Naive thymus-derived CD4-positive, alpha-beta T cell (primary cell): ENCODE measurements at regions of chr1 and their contacts with region 1.

Region 1: DNA sequence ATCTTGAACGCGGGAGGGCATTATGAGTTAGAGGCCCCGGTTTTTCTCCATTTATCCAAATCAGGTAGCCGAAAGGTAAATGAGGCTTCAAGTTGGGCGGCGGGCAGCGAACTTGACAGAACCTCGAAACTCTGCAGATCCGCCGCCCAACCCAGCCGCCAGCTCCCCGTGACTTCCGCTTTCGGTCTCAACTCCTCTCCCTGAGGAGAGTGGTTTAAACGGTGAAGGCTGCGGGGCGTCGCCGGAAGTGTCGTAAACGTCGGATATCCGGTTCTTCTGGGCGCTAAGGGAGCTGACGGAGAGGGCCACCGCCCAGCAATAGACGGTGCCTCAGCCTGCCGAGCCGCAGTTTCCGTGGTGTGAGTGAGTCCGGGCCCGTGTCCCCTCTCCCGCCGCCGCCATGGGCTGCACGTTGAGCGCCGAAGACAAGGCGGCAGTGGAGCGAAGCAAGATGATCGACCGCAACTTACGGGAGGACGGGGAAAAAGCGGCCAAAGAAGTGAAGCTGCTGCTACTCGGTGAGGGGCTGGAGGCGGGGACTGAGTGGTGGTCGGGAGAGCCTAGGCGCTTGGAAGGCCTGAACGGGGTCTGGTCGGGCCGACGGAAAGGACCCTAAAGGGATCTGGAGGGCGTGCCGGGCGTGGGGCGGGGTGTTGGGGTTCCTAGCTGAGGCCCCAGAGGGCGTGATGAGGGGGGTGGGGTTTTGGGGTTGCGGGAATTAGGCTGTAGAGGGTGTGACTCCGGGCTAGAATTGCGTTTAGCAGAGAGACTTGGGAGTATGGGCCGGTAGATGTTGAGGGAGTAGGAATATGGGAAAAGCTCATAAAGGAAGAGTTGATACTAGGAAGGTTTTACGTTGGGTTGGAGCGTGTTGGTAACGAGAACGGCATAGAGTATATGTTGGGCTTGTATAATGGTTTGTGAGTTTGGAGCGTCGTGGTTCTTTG is at the start of gene GNAI3:
- DNase-seq: peak; percentile 78 to 97 (median 95)
- ATAC-seq: peak; percentile 96
- H3K4me3 ChIP-seq: peak within 1 kb of the TSS; percentile 89
- H3K4me3 Mint-ChIP-seq: peak within 1 kb of the TSS; percentile 90 to 99 (median 97)
- H3K27ac ChIP-seq: peak within 1 kb of the TSS; percentile 93
- H3K27ac Mint-ChIP-seq: peak within 1 kb of the TSS; percentile 89 to 100 (median 99)
- H3K4me1 ChIP-seq: peaks cover 25 to 27% of the 10 kb centered on the region in 2 donors
- H3K4me1 Mint-ChIP-seq: peaks cover 30 to 75% (median 55%) of the 10 kb centered on the region in 7 donors
- H3K27me3 ChIP-seq: no peaks in the 10 kb centered on the region
- H3K27me3 Mint-ChIP-seq: no peaks in the 10 kb centered on the region
- total RNA-seq, gene GNAI3: 4.9 to 9.3 (median 7.0) TPM

Region 2: DNA sequence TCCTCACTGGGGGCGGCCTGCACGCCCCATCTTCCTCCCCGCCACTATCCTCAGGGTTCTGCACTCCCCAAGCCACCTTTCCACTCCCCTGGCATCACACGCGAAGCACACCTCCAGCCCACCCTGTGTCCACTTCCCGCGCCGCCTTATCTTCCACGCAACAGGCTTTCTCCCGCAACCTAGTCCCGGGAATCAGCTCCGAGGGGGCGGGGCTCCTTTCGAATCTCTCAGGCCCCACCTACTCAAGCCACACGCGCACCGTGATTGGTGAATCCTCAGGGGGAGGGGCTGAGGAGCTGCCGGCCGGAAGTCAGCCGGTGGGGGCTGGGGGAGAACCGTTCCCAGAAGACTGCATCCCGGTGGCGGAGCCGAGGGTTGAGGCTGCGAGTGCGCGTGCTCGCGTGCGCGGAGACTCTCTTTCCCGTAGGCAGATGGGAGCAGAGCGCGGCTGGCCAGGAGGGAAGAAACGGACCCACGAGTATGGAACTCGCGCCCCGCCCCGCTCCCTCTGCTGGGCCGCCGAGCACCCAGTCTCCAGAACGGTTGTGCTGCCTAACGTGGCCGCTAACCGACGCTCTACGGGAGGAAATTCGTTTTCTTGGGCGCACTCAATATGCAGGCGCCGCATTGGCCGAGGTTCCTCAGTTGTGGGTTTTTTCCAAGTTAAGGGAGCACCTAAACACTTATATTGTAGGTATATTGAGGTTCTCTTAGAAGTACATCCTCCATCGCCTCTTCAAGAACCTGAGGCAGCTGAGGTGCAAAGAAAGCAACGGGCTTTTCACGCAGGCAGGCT is 265.4 kb before region 1 on chr1 and contains the start of gene PSRC1:
- CTCF ChIA-PET with region 1: no interaction called
- POLR2A ChIA-PET with region 1: no interaction called
- intact Hi-C with region 1: loop called in 1 of 2 experiments (anchors 1 kb)
- DNase-seq: peak; percentile 78 to 94 (median 88)
- ATAC-seq: peak; percentile 98
- H3K4me3 ChIP-seq: peak within 1 kb of the TSS; percentile 92
- H3K4me3 Mint-ChIP-seq: peak within 1 kb of the TSS; percentile 89 to 99 (median 96)
- H3K27ac ChIP-seq: peak within 1 kb of the TSS; percentile 65
- H3K27ac Mint-ChIP-seq: peak within 1 kb of the TSS; percentile 55 to 94 (median 88)
- H3K4me1 ChIP-seq: peaks cover 8 to 11% of the 10 kb centered on the region in 2 donors
- H3K4me1 Mint-ChIP-seq: peaks cover 6 to 29% (median 14%) of the 10 kb centered on the region in 7 donors
- H3K27me3 ChIP-seq: no peaks in the 10 kb centered on the region
- H3K27me3 Mint-ChIP-seq: peaks cover 0 to 8% (median 0%) of the 10 kb centered on the region in 5 donors
- total RNA-seq, gene PSRC1: 0.38 to 16.1 (median 1.3) TPM in 4 of 5 experiments, not detected in the other

Region 3: GRCh38 chr1:109370712-109371455 is 177.7 kb before region 1 on chr1:
- CTCF ChIA-PET with region 1: no interaction called
- POLR2A ChIA-PET with region 1: no interaction called
- intact Hi-C with region 1: no loop called
- DNase-seq: no peak
- ATAC-seq: no peak
- H3K4me3 ChIP-seq: no peak overlapping the region
- H3K4me3 Mint-ChIP-seq: peak overlapping the region in 2 of 10 donors; percentile 20 to 68
- H3K27ac ChIP-seq: no peak overlapping the region
- H3K27ac Mint-ChIP-seq: peak overlapping the region in 1 of 9 donors; percentile 1
- H3K4me1 ChIP-seq: no peaks in the 10 kb centered on the region
- H3K4me1 Mint-ChIP-seq: peaks cover 4 to 49% (median 7%) of the 10 kb centered on the region in 7 donors
- H3K27me3 ChIP-seq: peaks cover 0 to 3% of the 10 kb centered on the region in 2 donors
- H3K27me3 Mint-ChIP-seq: peaks cover 21 to 40% (median 33%) of the 10 kb centered on the region in 5 donors

Region 4: DNA sequence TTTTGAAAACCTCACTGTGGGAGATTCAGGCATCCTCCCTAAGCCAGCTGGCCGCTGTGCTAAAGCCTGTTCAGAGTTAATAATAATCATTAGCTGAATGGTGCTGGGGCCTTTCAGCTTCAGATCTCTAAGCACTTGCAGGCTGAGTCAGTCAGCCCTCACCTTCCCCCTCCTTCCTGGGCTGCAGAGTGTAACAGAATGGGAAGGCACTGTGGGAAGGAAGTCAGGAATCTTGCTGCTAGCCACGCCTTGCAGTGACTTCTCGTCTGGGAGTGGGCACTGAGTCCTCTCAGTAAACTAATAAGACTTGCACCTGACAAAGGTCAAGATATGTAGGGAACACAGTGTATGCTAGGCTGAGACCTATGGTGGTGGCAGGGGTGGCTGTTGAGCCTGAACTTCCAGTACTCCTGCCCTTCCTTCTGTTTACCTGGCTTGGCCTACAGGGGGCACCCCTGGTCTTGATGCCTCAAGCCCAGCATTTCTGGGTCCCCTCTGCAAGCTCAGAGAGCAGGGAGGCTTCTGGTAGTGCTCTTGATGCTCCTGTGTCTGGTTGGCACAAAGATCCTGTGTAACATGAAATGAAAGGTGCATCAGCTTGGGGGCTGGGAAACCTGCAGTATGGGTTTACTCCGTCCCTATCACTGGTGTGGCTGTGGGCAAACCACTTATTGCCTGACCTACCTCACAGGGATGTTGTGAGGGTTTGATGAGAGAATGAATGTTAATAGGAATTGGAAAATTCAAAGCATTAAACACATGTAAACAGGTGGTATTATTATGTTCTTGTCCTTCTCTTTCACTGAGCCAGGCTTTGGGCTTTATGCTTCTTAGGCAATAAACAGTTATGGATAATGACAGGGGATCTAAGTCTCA is 48.7 kb before region 1 on chr1:
- CTCF ChIA-PET with region 1: interaction called, 1,240 read pairs
- POLR2A ChIA-PET with region 1: interaction called, 11 read pairs
- intact Hi-C with region 1: no loop called
- DNase-seq: peak in 8 of 9 donors; percentile 50 to 69 (median 62)
- ATAC-seq: peak; percentile 28
- H3K4me3 ChIP-seq: peak overlapping the region; percentile 9
- H3K4me3 Mint-ChIP-seq: peak overlapping the region; percentile 28 to 98 (median 89)
- H3K27ac ChIP-seq: peak overlapping the region; percentile 95
- H3K27ac Mint-ChIP-seq: peak overlapping the region; percentile 87 to 99 (median 98)
- H3K4me1 ChIP-seq: peaks cover 72 to 84% of the 10 kb centered on the region in 2 donors
- H3K4me1 Mint-ChIP-seq: peaks cover 68 to 99% (median 93%) of the 10 kb centered on the region in 7 donors
- H3K27me3 ChIP-seq: no peaks in the 10 kb centered on the region
- H3K27me3 Mint-ChIP-seq: no peaks in the 10 kb centered on the region

Region 5: DNA sequence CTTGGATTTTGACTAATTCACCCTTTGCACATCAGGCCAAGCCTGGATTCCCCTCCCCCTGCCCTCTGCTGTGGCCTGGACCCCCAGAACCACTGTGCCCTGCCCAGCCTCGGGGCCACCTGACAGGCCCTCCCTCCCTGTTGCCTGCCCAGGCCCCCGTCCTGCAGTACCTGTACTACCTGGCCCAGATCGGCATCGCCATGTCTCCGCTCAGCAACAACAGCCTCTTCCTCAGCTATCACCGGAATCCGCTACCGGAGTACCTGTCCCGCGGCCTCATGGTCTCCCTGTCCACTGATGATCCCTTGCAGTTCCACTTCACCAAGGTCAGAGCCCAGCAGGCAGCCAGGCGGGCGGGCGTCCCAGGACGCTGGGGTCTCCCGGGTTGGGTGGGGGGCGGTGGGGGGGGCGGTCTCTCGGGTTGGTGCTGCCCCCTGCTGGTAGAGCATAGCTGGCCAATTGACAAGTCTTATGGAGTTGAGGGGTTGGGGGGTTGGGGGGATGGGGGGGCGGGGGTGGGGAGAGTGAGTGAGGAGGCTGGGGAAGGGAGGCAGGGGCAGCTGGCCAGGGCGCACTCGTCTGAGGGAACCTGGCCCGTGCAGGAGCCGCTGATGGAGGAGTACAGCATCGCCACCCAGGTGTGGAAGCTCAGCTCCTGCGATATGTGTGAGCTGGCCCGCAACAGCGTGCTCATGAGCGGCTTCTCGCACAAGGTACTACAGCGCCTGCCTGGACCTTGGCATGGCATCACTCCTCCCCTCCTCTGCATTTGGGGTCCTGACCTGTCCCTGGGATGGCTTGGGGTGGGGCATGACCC is 81.7 kb after region 1 on chr1:
- CTCF ChIA-PET with region 1: interaction called, 84 read pairs
- POLR2A ChIA-PET with region 1: interaction called, 13 read pairs
- intact Hi-C with region 1: loop called in 1 of 2 experiments (anchors 1 kb)
- DNase-seq: peak in 5 of 9 donors; percentile 21 to 51 (median 35)
- ATAC-seq: peak; percentile 26
- H3K4me3 ChIP-seq: no peak overlapping the region
- H3K4me3 Mint-ChIP-seq: no peak overlapping the region
- H3K27ac ChIP-seq: no peak overlapping the region
- H3K27ac Mint-ChIP-seq: peak overlapping the region in 3 of 9 donors; percentile 33 to 38 (median 34)
- H3K4me1 ChIP-seq: peaks cover 0 to 10% of the 10 kb centered on the region in 2 donors
- H3K4me1 Mint-ChIP-seq: peaks cover 6 to 22% (median 15%) of the 10 kb centered on the region in 7 donors
- H3K27me3 ChIP-seq: no peaks in the 10 kb centered on the region
- H3K27me3 Mint-ChIP-seq: no peaks in the 10 kb centered on the region

Region 6: DNA sequence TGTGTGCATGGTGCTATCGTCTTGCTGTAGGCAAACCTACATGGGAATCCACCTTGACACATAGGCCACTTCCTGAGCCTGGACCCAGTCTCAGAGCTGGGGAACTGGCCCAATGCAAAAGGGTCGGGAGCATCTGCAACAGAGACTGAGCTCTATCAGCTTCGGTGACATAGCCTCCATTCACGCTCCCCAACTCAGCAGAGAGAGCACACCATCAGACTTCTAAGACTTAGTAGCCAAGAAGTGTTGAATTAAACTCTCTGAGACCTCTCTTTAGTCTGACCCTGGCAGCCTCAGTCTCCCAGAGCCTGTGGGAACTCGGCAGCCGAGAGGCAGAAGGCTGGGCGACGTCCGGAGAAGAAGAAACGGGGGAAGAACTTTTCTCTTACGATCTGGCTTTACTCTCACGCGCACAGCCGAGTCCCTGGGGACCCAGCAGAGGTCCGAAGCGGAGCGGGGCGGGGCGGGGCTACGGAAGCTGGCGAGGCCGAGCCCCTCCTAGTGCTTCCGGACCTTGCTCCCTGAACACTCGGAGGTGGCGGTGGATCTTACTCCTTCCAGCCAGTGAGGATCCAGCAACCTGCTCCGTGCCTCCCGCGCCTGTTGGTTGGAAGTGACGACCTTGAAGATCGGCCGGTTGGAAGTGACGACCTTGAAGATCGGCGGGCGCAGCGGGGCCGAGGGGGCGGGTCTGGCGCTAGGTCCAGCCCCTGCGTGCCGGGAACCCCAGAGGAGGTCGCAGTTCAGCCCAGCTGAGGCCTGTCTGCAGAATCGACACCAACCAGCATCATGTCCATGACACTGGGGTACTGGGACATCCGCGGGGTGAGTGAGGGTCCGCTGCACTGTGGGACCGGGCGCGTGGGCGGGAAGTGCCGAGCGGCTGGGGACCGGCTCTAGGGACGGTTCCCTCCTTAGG is 107.3 kb after region 1 on chr1 and contains the start of gene GSTM4:
- CTCF ChIA-PET with region 1: no interaction called
- POLR2A ChIA-PET with region 1: no interaction called
- intact Hi-C with region 1: no loop called
- DNase-seq: peak in 8 of 9 donors; percentile 18 to 76 (median 38)
- ATAC-seq: peak; percentile 88
- H3K4me3 ChIP-seq: peak within 1 kb of the TSS; percentile 89
- H3K4me3 Mint-ChIP-seq: peak within 1 kb of the TSS; percentile 87 to 96 (median 94)
- H3K27ac ChIP-seq: peak within 1 kb of the TSS; percentile 67
- H3K27ac Mint-ChIP-seq: peak within 1 kb of the TSS; percentile 76 to 94 (median 87)
- H3K4me1 ChIP-seq: peaks cover 6 to 9% of the 10 kb centered on the region in 2 donors
- H3K4me1 Mint-ChIP-seq: peaks cover 10 to 36% (median 24%) of the 10 kb centered on the region in 7 donors
- H3K27me3 ChIP-seq: no peaks in the 10 kb centered on the region
- H3K27me3 Mint-ChIP-seq: peaks cover 0 to 28% (median 0%) of the 10 kb centered on the region in 5 donors
- total RNA-seq, gene GSTM4: 14.2 to 28.4 (median 16.1) TPM

Region 7: GRCh38 chr1:109728870-109729269 is 180.3 kb after region 1 on chr1:
- CTCF ChIA-PET with region 1: no interaction called
- POLR2A ChIA-PET with region 1: no interaction called
- intact Hi-C with region 1: no loop called
- DNase-seq: no peak
- ATAC-seq: no peak
- H3K4me3 ChIP-seq: no peak overlapping the region
- H3K4me3 Mint-ChIP-seq: no peak overlapping the region
- H3K27ac ChIP-seq: no peak overlapping the region
- H3K27ac Mint-ChIP-seq: no peak overlapping the region
- H3K4me1 ChIP-seq: no peaks in the 10 kb centered on the region
- H3K4me1 Mint-ChIP-seq: no peaks in the 10 kb centered on the region
- H3K27me3 ChIP-seq: peaks cover 0 to 3% of the 10 kb centered on the region in 2 donors
- H3K27me3 Mint-ChIP-seq: peaks cover 0 to 41% (median 0%) of the 10 kb centered on the region in 5 donors

Region 8: GRCh38 chr1:109739738-109740660 is 191.4 kb after region 1 on chr1:
- CTCF ChIA-PET with region 1: no interaction called
- POLR2A ChIA-PET with region 1: interaction called, 3 read pairs
- intact Hi-C with region 1: loop called in 1 of 2 experiments (anchors 1 kb)
- DNase-seq: peak; percentile 73 to 87 (median 85)
- ATAC-seq: peak; percentile 99
- H3K4me3 ChIP-seq: peak overlapping the region; percentile 70
- H3K4me3 Mint-ChIP-seq: peak overlapping the region; percentile 71 to 93 (median 87)
- H3K27ac ChIP-seq: peak overlapping the region; percentile 81
- H3K27ac Mint-ChIP-seq: peak overlapping the region; percentile 17 to 95 (median 72)
- H3K4me1 ChIP-seq: peaks cover 0 to 11% of the 10 kb centered on the region in 2 donors
- H3K4me1 Mint-ChIP-seq: peaks cover 3 to 21% (median 13%) of the 10 kb centered on the region in 7 donors
- H3K27me3 ChIP-seq: no peaks in the 10 kb centered on the region
- H3K27me3 Mint-ChIP-seq: peaks cover 0 to 51% (median 0%) of the 10 kb centered on the region in 5 donors

Region 9: GRCh38 chr1:109984456-109985275 is 436.1 kb after region 1 on chr1 and contains the start of gene AHCYL1:
- CTCF ChIA-PET with region 1: interaction called, 15 read pairs
- POLR2A ChIA-PET with region 1: interaction called, 15 read pairs
- intact Hi-C with region 1: loop called (anchors 1 kb)
- DNase-seq: peak; percentile 97 to 99 (median 99)
- ATAC-seq: peak; percentile 99
- H3K4me3 ChIP-seq: peak within 1 kb of the TSS; percentile 72
- H3K4me3 Mint-ChIP-seq: peak within 1 kb of the TSS; percentile 87 to 100 (median 97)
- H3K27ac ChIP-seq: peak within 1 kb of the TSS; percentile 92
- H3K27ac Mint-ChIP-seq: peak within 1 kb of the TSS; percentile 94 to 99 (median 98)
- H3K4me1 ChIP-seq: peaks cover 22 to 24% of the 10 kb centered on the region in 2 donors
- H3K4me1 Mint-ChIP-seq: peaks cover 22 to 49% (median 42%) of the 10 kb centered on the region in 7 donors
- H3K27me3 ChIP-seq: no peaks in the 10 kb centered on the region
- H3K27me3 Mint-ChIP-seq: peaks cover 0 to 6% (median 0%) of the 10 kb centered on the region in 5 donors
- total RNA-seq, gene AHCYL1: 16.6 to 60.1 (median 37.1) TPM

Region 10: DNA sequence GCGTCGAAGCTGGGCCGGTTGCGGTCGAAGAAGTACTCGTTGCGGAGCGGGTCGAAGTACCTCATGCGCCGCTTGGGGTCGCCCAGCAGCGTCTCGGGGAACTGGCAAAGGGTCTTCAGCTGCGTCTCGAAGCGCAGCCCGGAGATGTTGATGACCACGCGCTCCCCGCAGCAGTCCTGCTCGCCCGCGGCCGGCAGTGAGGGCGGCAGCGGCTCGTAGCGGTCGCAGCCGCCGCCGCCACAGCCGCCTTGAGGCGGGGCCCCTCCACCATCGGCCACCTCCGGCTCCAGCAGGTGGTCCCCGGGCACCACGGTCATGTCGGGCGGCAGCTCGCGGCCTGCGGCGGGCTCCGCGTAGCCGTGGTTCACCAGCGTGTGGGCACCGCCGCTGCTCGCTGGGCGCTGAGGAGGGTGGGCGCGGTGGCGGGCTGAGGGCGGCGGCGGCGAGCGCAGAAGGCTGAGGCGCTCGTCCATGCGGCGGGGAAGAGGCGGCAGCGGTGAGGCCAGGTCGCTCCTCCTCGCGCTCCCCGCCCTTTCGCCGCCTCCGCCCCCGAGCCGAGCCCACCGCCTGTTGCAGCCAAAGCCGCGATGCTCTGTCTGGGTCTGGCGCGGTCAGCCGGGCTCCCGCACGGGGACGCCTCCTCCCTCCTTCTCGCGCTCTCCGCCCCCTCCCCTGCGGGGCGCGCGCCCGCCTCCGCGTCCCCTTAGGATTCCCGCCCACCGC is 1125.9 kb after region 1 on chr1 and contains the start of gene KCNA3:
- CTCF ChIA-PET with region 1: no interaction called
- POLR2A ChIA-PET with region 1: no interaction called
- intact Hi-C with region 1: loop called in 1 of 2 experiments (anchors 2 kb)
- DNase-seq: peak; percentile 52 to 74 (median 63)
- ATAC-seq: peak; percentile 54
- H3K4me3 ChIP-seq: peak within 1 kb of the TSS; percentile 97
- H3K4me3 Mint-ChIP-seq: peak within 1 kb of the TSS; percentile 55 to 100 (median 99)
- H3K27ac ChIP-seq: peak within 1 kb of the TSS; percentile 88
- H3K27ac Mint-ChIP-seq: peak within 1 kb of the TSS; percentile 93 to 100 (median 100)
- H3K4me1 ChIP-seq: peaks cover 5% of the 10 kb centered on the region in 2 donors
- H3K4me1 Mint-ChIP-seq: peaks cover 27 to 60% (median 55%) of the 10 kb centered on the region in 7 donors
- H3K27me3 ChIP-seq: no peaks in the 10 kb centered on the region
- H3K27me3 Mint-ChIP-seq: peaks cover 0 to 2% (median 0%) of the 10 kb centered on the region in 5 donors
- total RNA-seq, gene KCNA3: 74.1 to 115 (median 108) TPM